Naive thymus-derived CD4-positive, alpha-beta T cell (primary cell): ENCODE measurements at regions of chr11 and their contacts with region 1.

Region 1: GRCh38 chr11:105044921-105045524 is at the start of gene CARD16:
- DNase-seq: peak; percentile 8 to 57 (median 47)
- ATAC-seq: peak; percentile 91
- H3K4me3 ChIP-seq: peak within 1 kb of the TSS; percentile 62
- H3K4me3 Mint-ChIP-seq: peak within 1 kb of the TSS; percentile 89 to 100 (median 94)
- H3K27ac ChIP-seq: peak within 1 kb of the TSS; percentile 87
- H3K27ac Mint-ChIP-seq: peak within 1 kb of the TSS; percentile 94 to 100 (median 97)
- H3K4me1 ChIP-seq: peaks cover 19% of the 10 kb centered on the region in 2 donors
- H3K4me1 Mint-ChIP-seq: peaks cover 35 to 67% (median 48%) of the 10 kb centered on the region in 7 donors
- H3K27me3 ChIP-seq: no peaks in the 10 kb centered on the region
- H3K27me3 Mint-ChIP-seq: no peaks in the 10 kb centered on the region
- total RNA-seq, gene CARD16: 37.1 to 103 (median 42.4) TPM

Region 2: DNA sequence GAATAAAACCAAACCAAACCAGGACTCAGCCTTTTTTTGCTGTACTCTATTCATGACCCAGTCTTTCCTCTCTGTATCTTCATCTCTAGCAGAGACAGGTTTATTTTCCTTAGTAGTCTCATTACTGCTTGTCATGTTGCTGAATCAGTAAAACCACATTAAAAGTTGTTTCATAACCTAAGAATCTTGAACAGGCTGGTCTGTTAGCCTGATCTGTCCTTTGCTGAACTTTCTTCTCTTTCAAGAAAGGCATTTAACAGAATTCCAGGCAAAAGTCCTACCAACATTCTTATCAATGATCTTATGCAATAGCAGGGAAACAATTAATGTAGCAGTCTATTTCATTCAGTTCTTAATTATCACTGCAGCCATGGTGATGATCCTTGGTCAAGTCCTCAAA is 344.4 kb before region 1 on chr11:
- CTCF ChIA-PET with region 1: no interaction called
- POLR2A ChIA-PET with region 1: interaction called, 3 read pairs
- intact Hi-C with region 1: loop called (anchors 5 kb)
- DNase-seq: peak in 5 of 9 donors; percentile 9 to 46 (median 30)
- ATAC-seq: peak; percentile 73
- H3K4me3 ChIP-seq: no peak overlapping the region
- H3K4me3 Mint-ChIP-seq: peak overlapping the region in 7 of 10 donors; percentile 11 to 65 (median 35)
- H3K27ac ChIP-seq: no peak overlapping the region
- H3K27ac Mint-ChIP-seq: peak overlapping the region in 6 of 9 donors; percentile 17 to 70 (median 28)
- H3K4me1 ChIP-seq: peaks cover 23 to 24% of the 10 kb centered on the region in 2 donors
- H3K4me1 Mint-ChIP-seq: peaks cover 22 to 42% (median 35%) of the 10 kb centered on the region in 7 donors
- H3K27me3 ChIP-seq: no peaks in the 10 kb centered on the region
- H3K27me3 Mint-ChIP-seq: no peaks in the 10 kb centered on the region

Region 3: DNA sequence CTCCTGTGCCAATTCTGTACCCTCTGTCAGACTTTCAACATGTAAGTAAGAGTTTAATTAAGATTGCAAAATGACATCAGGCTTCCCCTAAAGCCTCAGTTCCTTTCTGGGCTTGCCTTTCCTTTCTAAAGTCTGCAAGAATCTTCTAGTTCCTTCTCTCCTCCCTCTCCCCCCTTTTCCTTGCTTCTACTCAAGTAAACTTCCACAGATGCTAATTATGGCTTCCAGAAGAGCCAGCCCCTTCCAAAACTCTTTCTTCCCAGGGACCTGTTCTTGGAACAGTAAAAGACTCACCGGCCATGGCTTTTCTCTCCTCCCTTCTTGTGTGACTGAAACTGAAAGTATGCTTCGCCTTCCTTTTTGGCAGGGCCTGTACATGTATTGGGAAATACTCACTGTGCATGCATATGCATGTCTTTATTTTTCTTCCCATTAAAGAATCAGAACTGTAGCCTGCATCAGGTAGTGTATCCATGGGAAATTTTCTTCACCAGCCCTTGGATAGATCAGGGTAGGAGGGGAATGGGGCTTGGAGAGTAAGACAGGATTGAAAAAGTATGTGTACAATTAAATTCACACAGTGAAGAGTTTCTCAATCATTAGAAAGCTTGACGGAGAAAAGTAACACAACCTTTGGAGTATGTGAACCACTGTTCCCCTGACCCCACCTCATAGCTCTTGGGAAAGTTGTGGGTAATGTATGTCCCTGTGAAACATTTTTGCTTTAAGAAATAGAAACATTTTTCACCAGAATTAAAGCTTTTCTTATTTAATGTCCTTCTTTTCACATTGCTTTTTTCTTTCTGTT is 10.0 kb before region 1 on chr11 and contains the start of gene CASP1:
- CTCF ChIA-PET with region 1: no interaction called
- POLR2A ChIA-PET with region 1: interaction called, 8 read pairs
- intact Hi-C with region 1: loop called (anchors 1 to 2 kb)
- DNase-seq: peak in 7 of 9 donors; percentile 26 to 52 (median 38)
- ATAC-seq: peak; percentile 82
- H3K4me3 ChIP-seq: peak within 1 kb of the TSS; percentile 70
- H3K4me3 Mint-ChIP-seq: peak within 1 kb of the TSS; percentile 90 to 98 (median 94)
- H3K27ac ChIP-seq: peak within 1 kb of the TSS; percentile 85
- H3K27ac Mint-ChIP-seq: peak within 1 kb of the TSS; percentile 92 to 100 (median 96)
- H3K4me1 ChIP-seq: peaks cover 19 to 37% of the 10 kb centered on the region in 2 donors
- H3K4me1 Mint-ChIP-seq: peaks cover 32 to 63% (median 59%) of the 10 kb centered on the region in 7 donors
- H3K27me3 ChIP-seq: no peaks in the 10 kb centered on the region
- H3K27me3 Mint-ChIP-seq: no peaks in the 10 kb centered on the region
- total RNA-seq, gene CASP1: 29.5 to 141 (median 51.8) TPM

Region 4: GRCh38 chr11:105100206-105100605 is 55.2 kb after region 1 on chr11:
- CTCF ChIA-PET with region 1: interaction called, 3 read pairs
- POLR2A ChIA-PET with region 1: no interaction called
- intact Hi-C with region 1: loop called in 1 of 2 experiments (anchors 2 kb)
- DNase-seq: peak in 2 of 9 donors; percentile 3 to 4
- ATAC-seq: peak; percentile 87
- H3K4me3 ChIP-seq: peak overlapping the region; percentile 53
- H3K4me3 Mint-ChIP-seq: peak overlapping the region in 8 of 10 donors; percentile 16 to 87 (median 56)
- H3K27ac ChIP-seq: no peak overlapping the region
- H3K27ac Mint-ChIP-seq: peak overlapping the region in 6 of 9 donors; percentile 1 to 93 (median 4)
- H3K4me1 ChIP-seq: peaks cover 6 to 18% of the 10 kb centered on the region in 2 donors
- H3K4me1 Mint-ChIP-seq: peaks cover 23 to 43% (median 31%) of the 10 kb centered on the region in 7 donors
- H3K27me3 ChIP-seq: no peaks in the 10 kb centered on the region
- H3K27me3 Mint-ChIP-seq: no peaks in the 10 kb centered on the region

Region 5: GRCh38 chr11:105220121-105220520 is 175.1 kb after region 1 on chr11:
- CTCF ChIA-PET with region 1: no interaction called
- POLR2A ChIA-PET with region 1: no interaction called
- intact Hi-C with region 1: no loop called
- DNase-seq: no peak
- ATAC-seq: peak; percentile 66
- H3K4me3 ChIP-seq: no peak overlapping the region
- H3K4me3 Mint-ChIP-seq: no peak overlapping the region
- H3K27ac ChIP-seq: no peak overlapping the region
- H3K27ac Mint-ChIP-seq: no peak overlapping the region
- H3K4me1 ChIP-seq: no peaks in the 10 kb centered on the region
- H3K4me1 Mint-ChIP-seq: no peaks in the 10 kb centered on the region
- H3K27me3 ChIP-seq: no peaks in the 10 kb centered on the region
- H3K27me3 Mint-ChIP-seq: peaks cover 3 to 10% (median 4%) of the 10 kb centered on the region in 5 donors

Region 6: DNA sequence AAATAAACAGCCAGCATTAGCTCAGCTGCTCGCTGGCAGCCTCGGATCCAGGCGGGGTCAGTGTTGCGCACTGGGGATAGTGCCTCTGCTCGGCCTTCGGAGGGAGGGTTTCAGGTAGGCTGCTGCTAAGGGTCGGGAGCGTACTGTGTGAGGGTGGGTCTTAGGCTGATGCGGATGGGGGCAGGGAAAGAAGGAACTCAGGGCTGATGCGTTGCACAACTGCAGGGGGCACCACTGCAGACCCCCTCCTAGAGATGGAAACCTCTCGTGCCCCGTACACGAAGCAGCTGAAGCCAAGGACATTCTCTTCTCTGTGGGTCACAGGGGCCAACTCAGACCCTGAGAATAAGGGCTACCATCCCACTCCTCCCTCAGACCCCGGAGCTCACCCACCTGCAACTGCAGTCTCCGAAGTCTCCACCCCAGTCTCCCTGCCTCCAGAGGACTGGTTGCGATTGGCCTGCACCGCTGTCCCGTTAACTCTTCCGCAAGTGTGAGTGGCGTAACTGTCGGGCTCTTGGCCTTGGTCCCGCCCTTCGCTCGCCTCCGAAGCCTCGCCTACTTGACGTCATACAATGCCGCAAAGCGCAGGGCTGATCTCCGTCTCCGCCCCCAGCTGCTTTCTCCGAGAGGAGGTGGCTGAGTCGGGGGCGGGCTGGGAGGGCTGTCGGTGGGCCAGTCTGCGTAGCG is 1032.0 kb after region 1 on chr11 and contains the start of gene KBTBD3:
- CTCF ChIA-PET with region 1: no interaction called
- POLR2A ChIA-PET with region 1: no interaction called
- intact Hi-C with region 1: loop called (anchors 10 kb)
- DNase-seq: peak; percentile 90 to 99 (median 98)
- ATAC-seq: peak; percentile 93
- H3K4me3 ChIP-seq: peak within 1 kb of the TSS; percentile 85
- H3K4me3 Mint-ChIP-seq: peak within 1 kb of the TSS; percentile 95 to 100 (median 98)
- H3K27ac ChIP-seq: peak within 1 kb of the TSS; percentile 91
- H3K27ac Mint-ChIP-seq: peak within 1 kb of the TSS; percentile 91 to 99 (median 98)
- H3K4me1 ChIP-seq: peaks cover 29 to 35% of the 10 kb centered on the region in 2 donors
- H3K4me1 Mint-ChIP-seq: peaks cover 34 to 76% (median 69%) of the 10 kb centered on the region in 7 donors
- H3K27me3 ChIP-seq: no peaks in the 10 kb centered on the region
- H3K27me3 Mint-ChIP-seq: no peaks in the 10 kb centered on the region
- total RNA-seq, gene KBTBD3: 5.1 to 16.6 (median 7.3) TPM